T-cell (primary cell): ENCODE measurements at regions of chr2 and their contacts with region 1.

Region 1: GRCh38 chr2:217687771-217688170 is 315.0 kb downstream of the TNS1 start:
- DNase-seq: no peak
- ATAC-seq: no peak
- H3K4me3 ChIP-seq: no peak overlapping the region
- H3K4me3 Mint-ChIP-seq: no peak overlapping the region
- H3K27ac ChIP-seq: no peak overlapping the region
- H3K27ac Mint-ChIP-seq: no peak overlapping the region
- H3K4me1 ChIP-seq: no peaks in the 10 kb centered on the region
- H3K4me1 Mint-ChIP-seq: no peaks in the 10 kb centered on the region
- H3K27me3 ChIP-seq: no peaks in the 10 kb centered on the region
- H3K27me3 Mint-ChIP-seq: peaks cover 0 to 4% of the 10 kb centered on the region in 2 donors

Region 2: GRCh38 chr2:217027414-217027813 is 660.4 kb before region 1 on chr2:
- CTCF ChIA-PET with region 1: no interaction called
- POLR2A ChIA-PET with region 1: no interaction called
- DNase-seq: no peak
- ATAC-seq: no peak
- H3K4me3 ChIP-seq: no peak overlapping the region
- H3K4me3 Mint-ChIP-seq: no peak overlapping the region
- H3K27ac ChIP-seq: no peak overlapping the region
- H3K27ac Mint-ChIP-seq: no peak overlapping the region
- H3K4me1 ChIP-seq: no peaks in the 10 kb centered on the region
- H3K4me1 Mint-ChIP-seq: no peaks in the 10 kb centered on the region
- H3K27me3 ChIP-seq: no peaks in the 10 kb centered on the region
- H3K27me3 Mint-ChIP-seq: peaks cover 8 to 21% of the 10 kb centered on the region in 2 donors

Region 3: GRCh38 chr2:219009294-219009693 is 1321.5 kb after region 1 on chr2:
- CTCF ChIA-PET with region 1: interaction called in 1 of 2 experiments, 15 read pairs
- POLR2A ChIA-PET with region 1: no interaction called
- DNase-seq: no peak
- ATAC-seq: no peak
- H3K4me3 ChIP-seq: no peak overlapping the region
- H3K4me3 Mint-ChIP-seq: no peak overlapping the region
- H3K27ac ChIP-seq: no peak overlapping the region
- H3K27ac Mint-ChIP-seq: no peak overlapping the region
- H3K4me1 ChIP-seq: no peaks in the 10 kb centered on the region
- H3K4me1 Mint-ChIP-seq: peaks cover 0 to 2% (median 0%) of the 10 kb centered on the region in 3 donors
- H3K27me3 ChIP-seq: peaks cover 6 to 76% of the 10 kb centered on the region in 2 experiments
- H3K27me3 Mint-ChIP-seq: peaks cover 42 to 66% of the 10 kb centered on the region in 2 donors